ENCODE measurements at regions of chr6 and their contacts with region 1.

Region 1: GRCh38 chr6:37691904-37692806 is 5.5 kb downstream of the MDGA1 start:
- DNase-seq: peak; percentile 71
- H3K4me3 ChIP-seq: no peak overlapping the region
- H3K27ac ChIP-seq: no peak overlapping the region
- H3K4me1 ChIP-seq: peaks cover 7% of the 10 kb centered on the region
- H3K27me3 ChIP-seq: peaks cover 32% of the 10 kb centered on the region
- CTCF ChIP-seq: peak; percentile 94

Region 2: DNA sequence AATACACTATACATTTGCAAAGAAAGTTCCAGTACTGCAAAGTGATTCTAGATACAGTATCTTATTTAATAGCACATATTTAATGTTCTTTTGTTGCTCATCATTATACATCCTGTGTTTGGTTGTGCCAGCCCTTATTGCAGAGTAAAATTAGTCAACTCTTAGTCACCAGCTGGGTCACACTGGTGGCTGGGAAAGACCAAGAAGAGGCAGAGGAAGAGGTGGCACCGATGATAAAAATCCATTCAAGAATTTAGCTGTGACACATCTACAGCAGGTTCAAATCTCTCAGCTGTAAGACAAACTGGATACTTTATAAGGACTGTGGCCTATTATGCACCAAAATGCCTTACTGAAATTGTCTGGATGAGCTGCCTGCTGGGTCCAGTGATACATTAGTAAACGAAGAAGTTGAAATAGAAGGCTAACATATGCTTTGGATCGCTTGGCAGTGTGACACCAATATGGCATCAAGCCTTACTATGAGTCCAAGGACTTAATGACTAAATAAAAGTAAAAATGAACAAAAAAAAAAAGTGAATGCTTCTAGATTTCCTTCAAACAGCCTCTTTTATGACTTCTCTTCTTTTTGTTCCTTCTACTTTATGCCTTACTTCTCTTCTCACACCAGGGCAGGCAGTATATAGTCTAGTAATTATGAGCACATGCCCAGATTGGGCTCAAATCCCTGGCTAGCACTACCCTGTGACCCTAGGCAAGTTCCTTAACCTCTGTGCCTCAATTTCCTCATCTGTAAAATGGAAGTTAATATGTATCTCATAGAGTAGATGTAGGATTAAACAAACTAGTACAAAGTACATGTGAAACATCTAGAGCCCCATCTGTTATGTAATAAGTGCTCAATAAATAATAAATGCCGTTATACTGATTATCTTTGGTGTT is 367.8 kb before region 1 on chr6:
- intact Hi-C with region 1: loop called (anchors 5 kb)
- DNase-seq: no peak
- H3K4me3 ChIP-seq: no peak overlapping the region
- H3K27ac ChIP-seq: no peak overlapping the region
- H3K4me1 ChIP-seq: no peaks in the 10 kb centered on the region
- H3K27me3 ChIP-seq: no peaks in the 10 kb centered on the region
- CTCF ChIP-seq: no peak

Region 3: DNA sequence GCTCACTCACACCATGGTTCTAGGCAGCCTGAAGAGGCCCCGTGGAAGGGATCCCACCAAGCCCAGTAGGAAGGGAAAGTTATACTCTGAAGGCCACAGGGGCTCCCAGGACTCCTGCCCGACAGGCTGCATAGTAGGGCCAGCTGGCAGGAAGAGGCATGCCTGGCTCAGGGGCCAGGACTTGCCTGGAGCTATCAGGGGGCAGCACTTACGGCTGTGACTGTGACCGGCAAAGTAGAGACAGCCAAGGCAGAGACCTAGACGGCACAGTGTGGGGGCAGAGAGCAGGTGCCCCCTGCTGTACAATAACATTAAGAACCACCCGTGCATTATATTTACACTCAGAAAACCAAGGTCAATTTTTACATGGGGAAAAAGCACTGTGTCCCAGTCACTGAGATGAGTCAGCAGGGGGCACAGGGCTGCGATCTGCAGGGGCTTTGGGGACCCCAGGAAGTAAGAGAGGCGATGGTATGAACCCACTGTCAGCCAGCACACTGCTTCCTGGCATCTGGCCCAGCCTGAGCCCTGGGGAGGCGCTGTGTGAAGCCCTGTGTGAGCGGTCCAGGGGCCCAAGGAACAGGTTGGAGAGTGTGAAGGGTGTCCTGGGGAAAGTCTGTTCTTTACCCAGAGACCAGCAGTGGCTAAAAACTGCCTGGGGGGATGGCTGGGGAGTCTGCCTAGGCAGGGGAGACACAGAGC is 202.3 kb before region 1 on chr6:
- intact Hi-C with region 1: loop called (anchors 5 kb)
- DNase-seq: no peak
- H3K4me3 ChIP-seq: no peak overlapping the region
- H3K27ac ChIP-seq: no peak overlapping the region
- H3K4me1 ChIP-seq: no peaks in the 10 kb centered on the region
- H3K27me3 ChIP-seq: no peaks in the 10 kb centered on the region
- CTCF ChIP-seq: no peak

Region 4: DNA sequence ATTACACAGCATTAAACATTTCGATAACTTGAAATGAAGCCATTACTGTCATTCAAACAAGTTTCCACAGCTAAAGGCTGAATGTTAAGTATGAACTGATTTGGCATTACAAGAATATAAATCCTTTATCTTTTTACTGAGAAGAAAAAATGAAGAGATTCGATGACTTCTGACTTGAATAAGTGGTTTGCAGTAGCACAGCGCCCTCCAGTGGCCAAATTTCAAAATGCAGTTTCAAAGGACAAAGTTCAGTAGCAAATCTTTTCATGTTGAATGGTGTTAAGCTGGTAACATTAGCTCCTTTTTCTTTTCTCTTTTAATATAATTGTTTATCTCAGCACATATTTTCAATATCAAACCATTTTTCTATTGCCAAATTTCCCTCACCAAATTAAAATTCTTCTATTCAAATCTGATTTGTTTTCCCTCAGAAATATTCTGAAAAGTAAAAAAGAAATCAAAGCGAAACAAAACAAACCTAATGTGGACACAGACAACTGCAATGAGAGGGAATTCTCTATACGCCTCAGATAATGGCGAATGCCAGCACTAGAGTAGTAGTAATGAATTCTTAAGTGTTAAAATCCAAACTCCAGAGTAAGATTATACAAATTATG is 801.9 kb after region 1 on chr6:
- intact Hi-C with region 1: loop called (anchors 10 kb)
- DNase-seq: peak; percentile 85
- H3K4me3 ChIP-seq: no peak overlapping the region
- H3K27ac ChIP-seq: no peak overlapping the region
- H3K4me1 ChIP-seq: no peaks in the 10 kb centered on the region
- H3K27me3 ChIP-seq: no peaks in the 10 kb centered on the region
- CTCF ChIP-seq: peak; percentile 94